Right ventricle myocardium superior (tissue), 1 donor: ENCODE measurements at regions of chr12 and their contacts with region 1.

Region 1: GRCh38 chr12:92987362-92987761 is 58.3 kb upstream of the EEA1 start:
- DNase-seq: no peak
- ATAC-seq: peak; percentile 85

Region 2: GRCh38 chr12:92561543-92561899 is 425.8 kb before region 1 on chr12:
- intact Hi-C with region 1: no loop called
- DNase-seq: no peak
- ATAC-seq: peak; percentile 93

Region 3: DNA sequence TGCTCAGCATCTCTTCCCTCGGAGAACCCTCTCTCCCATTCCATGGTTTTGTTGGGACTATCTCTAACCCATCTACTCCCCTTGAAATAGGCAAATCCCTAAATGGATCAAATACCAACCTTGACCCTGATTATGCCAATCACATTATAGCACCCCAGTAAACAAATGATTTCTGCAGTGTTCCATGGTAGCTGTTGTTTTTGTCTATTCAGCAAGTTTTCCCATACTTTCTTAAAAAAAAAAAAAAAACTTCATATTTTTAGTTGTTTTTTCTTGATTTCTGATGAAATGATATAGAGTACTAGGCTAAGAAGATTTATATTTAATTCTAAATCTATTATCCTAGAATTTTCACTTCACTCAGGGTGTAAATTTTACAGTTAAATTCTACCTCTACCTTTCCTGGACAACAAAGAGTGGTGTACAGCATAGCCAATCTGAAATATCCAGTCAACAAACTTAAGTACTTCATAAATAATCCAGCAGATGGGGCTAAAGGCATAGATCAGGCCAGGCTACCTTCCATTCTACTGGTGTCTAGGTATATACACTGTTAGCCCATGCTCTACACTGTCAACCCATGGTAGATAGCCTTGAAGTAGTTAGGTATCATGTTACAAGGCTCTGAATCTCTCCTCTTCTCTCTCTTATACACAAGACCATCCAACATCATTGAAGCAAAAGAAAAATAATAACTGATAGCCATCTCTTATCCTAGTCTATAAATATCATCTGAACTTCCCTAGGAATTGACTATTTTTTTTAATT is 202.4 kb before region 1 on chr12:
- intact Hi-C with region 1: loop called (anchors 10 kb)
- DNase-seq: no peak
- ATAC-seq: peak; percentile 95

Region 4: DNA sequence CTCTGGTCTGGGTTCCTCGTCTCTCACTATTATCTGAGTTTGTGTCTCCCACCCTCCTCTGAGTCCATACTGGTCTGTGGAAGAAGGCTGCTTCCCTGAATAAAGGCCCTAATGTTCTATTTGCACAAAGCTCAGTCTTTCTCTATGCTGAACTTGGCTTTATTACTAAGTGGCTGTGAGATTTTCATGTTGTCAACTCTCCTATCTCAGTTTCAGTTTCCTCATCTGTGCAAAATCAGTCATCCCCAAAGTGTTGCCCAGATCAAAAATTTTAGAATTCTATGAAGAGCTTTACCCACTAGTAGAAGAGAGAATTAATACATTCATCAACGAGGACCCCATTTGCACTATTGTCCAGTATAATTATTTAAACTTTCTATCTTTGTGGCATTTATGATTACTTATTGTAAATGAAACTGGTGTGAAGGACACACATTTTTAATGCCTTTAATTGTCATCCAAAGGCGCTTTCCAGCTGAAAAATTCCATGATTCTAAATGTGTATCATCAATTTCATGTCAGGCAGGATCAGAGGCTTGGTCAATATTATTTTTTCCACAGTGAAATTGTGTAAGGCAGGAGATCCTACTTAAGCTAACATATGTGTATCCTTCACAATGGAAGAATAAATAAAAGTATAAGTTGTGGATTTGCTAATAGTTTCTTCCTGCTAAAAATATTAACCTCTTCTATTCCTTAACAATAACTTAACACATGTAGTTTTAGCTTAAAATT is 20.8 kb after region 1 on chr12:
- intact Hi-C with region 1: no loop called
- DNase-seq: no peak
- ATAC-seq: no peak

Region 5: DNA sequence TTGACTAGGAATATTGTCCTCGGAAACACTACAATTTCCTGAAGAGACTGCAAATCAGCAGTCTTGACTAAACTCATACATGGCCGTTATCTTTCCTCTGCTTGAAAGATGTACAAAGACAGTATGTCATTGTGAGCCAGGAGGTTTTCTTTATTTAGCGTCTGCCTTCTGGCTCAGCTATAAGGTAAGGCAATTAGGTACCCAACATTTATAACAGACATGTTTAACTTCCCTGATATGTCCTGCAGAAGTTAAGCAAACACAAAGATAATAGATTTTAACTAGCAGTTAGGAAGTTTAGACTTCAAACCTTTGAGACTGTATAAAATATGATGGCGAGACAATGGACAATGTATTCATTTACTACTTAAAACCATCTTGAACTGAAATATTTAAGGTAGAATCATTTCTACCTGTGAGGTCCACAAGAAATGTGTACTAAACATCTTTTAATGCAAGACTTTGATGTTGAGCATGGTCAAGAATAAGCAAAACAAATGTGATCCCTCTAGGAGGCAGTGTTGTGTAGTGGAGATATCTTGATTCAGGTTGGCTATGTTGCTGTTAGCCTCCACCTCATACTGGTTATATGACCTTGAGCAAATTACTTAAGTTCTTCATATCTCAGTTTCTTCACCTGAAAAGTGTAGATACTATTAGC is 37.9 kb after region 1 on chr12:
- intact Hi-C with region 1: no loop called
- DNase-seq: no peak
- ATAC-seq: no peak

Region 6: DNA sequence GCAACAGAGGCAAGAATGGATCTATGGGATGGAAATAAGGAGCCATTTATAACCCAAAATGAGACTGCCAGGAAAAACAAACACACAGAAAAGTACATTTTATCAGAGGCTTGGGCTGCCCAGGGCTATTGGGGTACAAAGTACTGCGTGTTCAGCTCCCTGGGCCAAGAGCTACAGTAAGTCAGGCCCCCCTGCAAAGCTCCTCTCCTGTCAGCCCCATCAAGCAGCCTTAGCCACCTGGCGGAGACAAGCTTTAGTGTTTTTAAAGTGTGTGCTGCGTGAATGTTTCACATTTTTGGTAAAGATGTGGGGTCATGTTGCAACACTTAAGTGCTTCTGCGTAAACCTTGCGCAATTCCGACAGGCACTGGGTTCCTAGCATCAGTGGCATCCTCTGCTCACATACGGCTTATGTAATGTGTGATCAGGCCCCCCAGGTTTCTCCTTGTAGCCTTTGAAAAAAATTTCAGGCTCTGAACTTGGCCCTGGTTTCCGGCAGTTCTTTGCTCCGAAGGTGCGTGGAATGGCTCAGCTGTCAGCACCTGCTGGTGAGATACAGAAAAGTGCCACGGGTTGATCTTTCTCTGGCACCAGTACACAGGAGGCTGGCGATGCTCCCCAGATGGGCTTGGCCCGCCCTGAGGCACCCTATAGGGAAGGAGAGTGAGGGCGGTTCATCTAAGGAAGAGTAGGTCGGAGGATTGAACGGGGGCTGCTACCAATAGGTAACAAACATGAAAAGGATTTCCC is 140.4 kb after region 1 on chr12:
- intact Hi-C with region 1: loop called (anchors 5 kb)
- DNase-seq: peak; percentile 83
- ATAC-seq: peak; percentile 91

Region 7: DNA sequence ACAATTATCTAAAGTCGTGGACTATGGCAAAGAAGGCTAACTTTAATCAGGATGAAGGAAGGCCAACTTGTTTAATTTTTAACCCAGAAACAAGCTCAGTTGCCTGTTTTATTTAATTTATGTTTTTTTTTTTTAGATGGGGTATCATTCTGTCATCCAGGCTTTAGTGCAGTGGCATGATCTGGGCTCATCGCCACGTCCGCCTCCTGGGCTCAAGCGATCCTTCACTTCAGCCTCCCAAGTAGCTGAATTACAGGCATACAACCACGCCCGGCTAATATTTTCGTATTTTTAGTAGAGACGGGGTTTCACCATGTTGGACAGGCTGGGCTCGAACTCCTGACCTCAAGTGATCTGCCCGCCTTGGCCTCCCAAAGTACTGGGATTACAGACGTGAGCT is 410.1 kb after region 1 on chr12:
- intact Hi-C with region 1: loop called (anchors 5 kb)
- DNase-seq: no peak
- ATAC-seq: no peak

Region 8: GRCh38 chr12:93419388-93420034 is 432.1 kb after region 1 on chr12:
- intact Hi-C with region 1: loop called (anchors 5 kb)
- DNase-seq: no peak
- ATAC-seq: peak; percentile 63